Right ventricle myocardium inferior (tissue), 1 donor: ENCODE measurements at regions of chr4 and their contacts with region 1.

Region 1: GRCh38 chr4:113094802-113095201 is 45.3 kb downstream of the ANK2 start:
- DNase-seq: no peak
- ATAC-seq: no peak

Region 2: DNA sequence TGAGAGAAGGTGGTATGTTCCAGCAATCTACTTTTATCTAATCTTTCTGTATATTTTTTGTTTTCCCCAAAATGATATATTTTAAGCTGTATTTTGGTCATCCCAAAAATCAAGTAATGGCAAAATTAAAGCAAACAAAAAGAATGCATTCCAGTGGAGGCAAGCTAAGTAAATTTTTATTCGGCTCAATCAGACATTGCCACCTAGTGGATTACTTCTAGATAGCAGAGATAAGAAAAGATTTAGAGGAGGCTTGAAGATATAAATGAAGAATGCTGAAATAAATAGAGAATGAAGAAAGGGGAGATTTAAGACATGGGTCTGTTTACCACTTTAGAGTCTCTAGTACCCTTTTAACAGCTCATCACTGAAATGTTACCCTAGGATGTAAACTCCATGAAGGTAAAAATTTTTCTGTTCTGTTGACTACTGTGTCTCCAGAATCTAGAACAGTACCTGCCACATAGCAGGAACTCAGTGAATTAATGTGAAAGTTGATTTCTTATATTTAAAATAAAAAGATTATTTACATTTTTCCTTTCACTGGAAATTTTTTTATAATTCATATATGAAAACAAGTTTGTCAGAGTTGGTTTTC is 156.2 kb before region 1 on chr4:
- intact Hi-C with region 1: no loop called
- DNase-seq: no peak
- ATAC-seq: no peak

Region 3: GRCh38 chr4:112951362-112952312 is 143.2 kb before region 1 on chr4:
- intact Hi-C with region 1: loop called (anchors 10 kb)
- DNase-seq: no peak
- ATAC-seq: no peak

Region 4: GRCh38 chr4:113012786-113013185 is 82.0 kb before region 1 on chr4:
- intact Hi-C with region 1: no loop called
- DNase-seq: no peak
- ATAC-seq: no peak

Region 5: GRCh38 chr4:113162089-113162488 is 67.3 kb after region 1 on chr4:
- intact Hi-C with region 1: no loop called
- DNase-seq: no peak
- ATAC-seq: peak; percentile 31